Activated T-helper 1 cell treated with anti-CD3 and anti-CD28 coated beads, Interleukin-12 subunit alpha, Interleukin-12 subunit beta, Interleukin-2, Interleukin-4 antibody, amounts not matched to agents 30 ng/mL and 10 ng/mL and 1 ng/mL, durations not matched to agents 14 hours and 24 hours and 36 hours (primary cell): ENCODE measurements at regions of chr7 and their contacts with region 1.

Region 1: DNA sequence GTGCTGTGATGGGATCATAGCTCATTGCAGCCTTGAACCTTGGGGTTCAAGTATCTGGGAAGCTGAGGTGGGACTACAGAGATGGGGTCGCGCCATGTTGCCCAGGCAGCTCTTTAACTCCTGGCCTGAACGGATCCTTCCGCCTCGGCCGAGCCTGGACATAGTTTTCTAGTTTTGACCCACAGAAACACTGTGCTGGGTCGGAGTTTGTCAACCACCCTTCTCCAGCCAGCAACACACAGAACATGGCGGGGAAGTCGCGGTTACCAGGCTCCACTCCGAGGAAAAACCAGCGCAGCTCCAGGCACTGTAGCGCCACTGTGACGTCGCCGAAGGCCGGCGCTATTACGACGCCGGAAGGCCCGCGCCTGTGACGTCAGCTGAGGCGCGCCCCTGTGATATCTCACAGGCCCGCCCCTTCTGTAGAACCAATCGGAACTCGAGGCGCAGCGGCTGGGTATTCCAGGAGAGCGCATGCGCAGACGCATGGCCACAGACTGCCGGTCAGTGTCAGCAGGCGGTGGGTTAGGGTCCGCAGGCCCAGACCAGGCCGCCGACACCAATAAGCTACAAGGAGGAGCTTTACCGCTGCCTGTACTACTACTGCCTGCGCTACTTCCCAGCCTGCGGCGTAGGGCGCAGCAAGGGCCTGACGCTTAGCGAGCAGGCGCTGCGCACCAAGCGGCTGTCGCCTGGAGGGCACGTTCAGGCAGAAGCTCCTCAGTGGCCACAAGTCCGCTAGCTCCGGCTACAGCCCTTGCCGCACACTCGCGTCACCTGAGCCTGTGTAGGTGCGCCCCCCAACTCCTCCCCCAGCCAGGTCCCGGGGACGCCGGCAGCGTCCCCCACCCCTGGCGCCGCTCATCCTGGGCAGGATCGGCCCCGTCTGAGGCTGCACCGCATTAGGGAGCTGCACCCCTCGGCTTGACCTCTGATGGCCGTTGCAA is 135.2 kb upstream of the KCTD7 start:
- DNase-seq: peak; percentile 96
- H3K4me3 Mint-ChIP-seq: peak overlapping the region; percentile 89
- H3K27ac Mint-ChIP-seq: peak overlapping the region; percentile 89
- H3K4me1 Mint-ChIP-seq: peaks cover 10% of the 10 kb centered on the region
- H3K27me3 Mint-ChIP-seq: no peaks in the 10 kb centered on the region

Region 2: GRCh38 chr7:65872776-65873581 is 620.5 kb before region 1 on chr7 and contains the start of gene VKORC1L1:
- intact Hi-C with region 1: loop called (anchors 1 kb)
- DNase-seq: peak; percentile 92
- H3K4me3 Mint-ChIP-seq: peak within 1 kb of the TSS; percentile 85
- H3K27ac Mint-ChIP-seq: peak within 1 kb of the TSS; percentile 73
- H3K4me1 Mint-ChIP-seq: peaks cover 4% of the 10 kb centered on the region
- H3K27me3 Mint-ChIP-seq: no peaks in the 10 kb centered on the region
- total RNA-seq, gene VKORC1L1: 28.8 and 30.1 TPM in 2 replicates

Region 3: DNA sequence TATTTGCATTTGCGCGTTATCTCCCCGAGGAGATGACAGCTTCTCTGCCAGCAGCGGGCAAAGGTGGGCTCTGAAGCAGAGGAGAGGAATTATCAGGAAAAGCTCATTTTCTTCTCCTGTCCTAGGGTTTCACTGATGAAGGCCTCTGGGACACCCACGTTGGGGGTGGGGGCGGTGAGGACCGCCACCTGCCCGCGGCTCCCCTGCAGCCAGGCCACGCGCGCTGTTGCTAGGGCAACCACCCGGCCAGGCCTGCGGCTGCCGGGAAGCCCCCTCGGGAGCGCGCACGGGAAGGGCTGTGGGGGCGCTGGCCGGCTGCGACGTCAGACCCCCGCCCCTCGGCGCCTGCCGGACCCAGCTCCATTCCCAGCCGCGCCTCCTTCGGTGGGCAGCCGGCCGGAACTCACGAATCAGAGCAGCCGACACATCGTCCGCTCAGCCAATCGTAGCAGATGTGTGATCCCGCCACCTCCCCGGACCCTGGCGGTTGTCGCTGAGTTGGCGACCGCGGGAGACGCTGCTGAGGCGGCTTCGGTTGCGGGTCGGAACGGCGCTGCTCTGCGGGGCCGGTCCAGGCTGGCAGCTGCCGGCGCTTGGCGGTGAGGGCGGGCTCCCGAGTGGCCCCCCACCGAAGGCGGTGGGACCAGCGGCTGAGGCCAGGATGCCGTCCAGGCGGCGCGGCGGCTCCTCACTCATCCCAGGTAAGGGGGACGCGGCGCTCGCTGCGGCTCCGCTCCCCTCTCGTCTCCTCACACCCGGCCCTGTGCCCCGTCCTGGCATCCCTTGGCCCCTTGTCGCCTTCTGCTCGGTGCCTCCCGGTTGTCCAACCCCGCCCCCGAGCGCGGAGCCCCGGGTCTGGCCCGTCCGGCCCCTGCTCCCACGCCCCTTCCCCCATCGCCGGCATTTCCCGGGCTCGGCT is 288.4 kb before region 1 on chr7 and contains the start of gene TPST1:
- intact Hi-C with region 1: loop called (anchors 1 kb)
- DNase-seq: peak; percentile 77
- H3K4me3 Mint-ChIP-seq: peak within 1 kb of the TSS; percentile 92
- H3K27ac Mint-ChIP-seq: peak within 1 kb of the TSS; percentile 49
- H3K4me1 Mint-ChIP-seq: peaks cover 29% of the 10 kb centered on the region
- H3K27me3 Mint-ChIP-seq: peaks cover 36% of the 10 kb centered on the region
- total RNA-seq, gene TPST1: 1.6 and 1.8 TPM in 2 replicates

Region 4: DNA sequence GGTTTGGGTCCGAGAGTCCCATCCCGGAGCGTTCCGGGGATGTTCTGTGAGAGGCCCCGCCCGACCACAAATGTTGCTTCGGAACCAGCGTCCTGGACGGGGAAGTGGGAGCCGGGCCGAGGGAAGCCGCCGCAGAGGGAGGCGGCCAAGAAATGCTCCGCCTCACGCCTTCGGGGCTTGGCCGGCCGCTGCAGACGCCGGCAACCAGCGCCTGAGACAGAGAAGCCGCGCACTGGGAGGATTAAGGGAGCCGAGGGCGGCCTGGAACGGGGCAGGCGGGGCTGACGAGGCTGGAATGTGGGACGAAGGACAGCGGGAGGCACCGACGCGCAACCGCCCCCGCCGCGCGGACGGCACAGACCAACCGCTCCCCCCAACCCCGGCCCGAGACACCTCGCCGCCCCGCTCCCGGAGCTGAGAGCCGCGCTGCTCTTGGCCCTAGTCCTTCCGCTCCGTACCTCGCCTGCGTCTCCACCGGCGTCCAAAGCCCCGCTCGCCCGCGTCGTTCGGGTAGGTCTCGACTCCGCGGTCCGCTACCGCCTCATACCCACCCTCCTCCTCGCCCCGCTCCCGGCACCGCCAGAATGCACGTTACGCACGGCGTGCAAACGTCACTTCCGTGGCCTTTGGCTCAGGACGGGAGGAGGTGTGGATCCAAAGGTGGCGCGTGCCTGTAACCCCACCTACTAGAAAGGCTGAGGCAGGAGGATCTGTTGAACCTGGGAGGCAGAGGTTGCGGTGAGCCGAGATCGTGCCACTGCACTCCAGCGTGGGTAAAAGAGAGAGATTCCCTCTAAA is 98.5 kb after region 1 on chr7:
- intact Hi-C with region 1: loop called (anchors 1 kb)
- DNase-seq: peak; percentile 87
- H3K4me3 Mint-ChIP-seq: peak overlapping the region; percentile 96
- H3K27ac Mint-ChIP-seq: peak overlapping the region; percentile 93
- H3K4me1 Mint-ChIP-seq: peaks cover 46% of the 10 kb centered on the region
- H3K27me3 Mint-ChIP-seq: peaks cover 3% of the 10 kb centered on the region

Region 5: GRCh38 chr7:66681491-66682349 is 188.2 kb after region 1 on chr7:
- intact Hi-C with region 1: loop called (anchors 1 kb)
- DNase-seq: peak; percentile 93
- H3K4me3 Mint-ChIP-seq: peak overlapping the region; percentile 93
- H3K27ac Mint-ChIP-seq: peak overlapping the region; percentile 96
- H3K4me1 Mint-ChIP-seq: peaks cover 21% of the 10 kb centered on the region
- H3K27me3 Mint-ChIP-seq: no peaks in the 10 kb centered on the region